Endothelial cell of umbilical vein (primary cell): ENCODE measurements at regions of chr15 and their contacts with region 1.

Region 1: GRCh38 chr15:63135804-63136203 is 14.1 kb downstream of the LACTB start:
- DNase-seq: peak; percentile 94
- H3K4me3 ChIP-seq: no peak overlapping the region
- H3K27ac ChIP-seq: peak overlapping the region; percentile 96
- H3K4me1 ChIP-seq: peaks cover 36% of the 10 kb centered on the region
- H3K27me3 ChIP-seq: no peaks in the 10 kb centered on the region
- CTCF ChIP-seq: no peak
- POLR2A ChIP-seq: peak; percentile 78

Region 2: DNA sequence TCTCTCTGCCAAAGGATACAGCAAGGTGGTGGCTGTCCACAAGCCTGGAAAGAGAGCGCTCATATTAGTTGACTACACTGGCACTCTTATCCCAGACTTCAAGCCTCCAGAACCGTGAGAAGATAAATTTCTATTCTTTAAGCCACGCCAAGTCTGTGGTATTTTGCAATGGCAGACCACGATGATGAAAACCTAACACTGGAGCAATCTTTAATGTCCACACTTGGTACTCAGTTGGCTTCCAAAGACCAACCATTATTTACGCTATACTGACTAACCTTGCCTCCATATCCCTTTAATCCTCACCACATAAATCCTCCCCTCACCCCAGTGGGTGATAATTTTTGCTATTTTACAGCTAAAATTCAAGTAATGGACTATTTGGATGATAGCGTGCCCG is 31.1 kb before region 1 on chr15:
- CTCF ChIA-PET with region 1: no interaction called
- POLR2A ChIA-PET with region 1: no interaction called
- dilution Hi-C with region 1: no loop called
- intact Hi-C with region 1: no loop called
- DNase-seq: no peak
- H3K4me3 ChIP-seq: no peak overlapping the region
- H3K27ac ChIP-seq: no peak overlapping the region
- H3K4me1 ChIP-seq: peaks cover 3% of the 10 kb centered on the region
- H3K27me3 ChIP-seq: no peaks in the 10 kb centered on the region
- CTCF ChIP-seq: no peak
- POLR2A ChIP-seq: no peak

Region 3: GRCh38 chr15:63146669-63147068 is 10.9 kb after region 1 on chr15:
- CTCF ChIA-PET with region 1: interaction called, 11 read pairs
- POLR2A ChIA-PET with region 1: interaction called, 6 read pairs
- dilution Hi-C with region 1: no loop called
- intact Hi-C with region 1: no loop called
- DNase-seq: peak; percentile 32
- H3K4me3 ChIP-seq: no peak overlapping the region
- H3K27ac ChIP-seq: no peak overlapping the region
- H3K4me1 ChIP-seq: no peaks in the 10 kb centered on the region
- H3K27me3 ChIP-seq: no peaks in the 10 kb centered on the region
- CTCF ChIP-seq: peak in 1 of 2 donors; percentile 1
- POLR2A ChIP-seq: no peak

Region 4: DNA sequence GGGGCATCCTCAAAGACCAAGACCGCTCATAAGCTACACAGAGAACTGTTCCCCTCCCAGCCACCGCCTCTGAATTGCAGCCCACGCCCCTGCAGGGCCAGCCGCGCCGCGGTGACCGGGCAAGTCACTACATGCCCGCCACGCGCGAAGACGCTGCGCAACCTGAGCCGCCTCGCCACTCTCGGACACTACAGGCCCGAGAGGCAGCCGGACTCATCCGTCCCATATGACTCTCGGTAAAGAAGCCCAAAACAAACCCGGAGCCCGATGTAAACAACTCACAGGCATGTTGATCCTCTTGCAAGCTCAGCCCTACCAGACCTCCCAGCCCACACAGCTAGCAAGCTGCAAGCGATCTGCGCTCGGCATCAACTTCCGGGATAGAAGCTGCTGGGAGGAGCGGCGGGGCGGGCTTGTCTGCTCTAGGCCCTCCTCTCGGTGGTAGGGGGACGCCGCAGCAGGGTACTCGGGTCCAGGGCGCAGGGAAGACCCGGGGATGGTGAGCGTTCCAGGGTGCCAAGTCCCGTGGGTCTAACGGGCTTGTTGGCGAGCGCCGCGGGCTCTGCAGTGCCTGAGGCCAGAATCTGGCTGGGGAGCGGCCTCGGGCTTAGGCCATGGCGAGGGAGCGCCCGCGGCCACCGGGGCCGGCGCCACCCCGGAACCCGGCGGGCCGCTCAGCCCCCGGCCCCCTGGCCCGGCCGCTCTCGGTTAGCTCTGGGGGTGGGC is 21.5 kb after region 1 on chr15 and contains the start of gene RPS27L:
- CTCF ChIA-PET with region 1: interaction called, 8 read pairs
- POLR2A ChIA-PET with region 1: interaction called, 6 read pairs
- dilution Hi-C with region 1: no loop called
- intact Hi-C with region 1: loop called (anchors 1 kb)
- DNase-seq: peak; percentile 92
- H3K4me3 ChIP-seq: peak within 1 kb of the TSS; percentile 54 to 98 (median 88)
- H3K27ac ChIP-seq: peak within 1 kb of the TSS; percentile 71
- H3K4me1 ChIP-seq: peaks cover 11% of the 10 kb centered on the region
- H3K27me3 ChIP-seq: no peaks in the 10 kb centered on the region
- CTCF ChIP-seq: no peak
- POLR2A ChIP-seq: peak; percentile 99
- total RNA-seq, gene RPS27L: 338 and 345 TPM in 2 replicates

Region 5: DNA sequence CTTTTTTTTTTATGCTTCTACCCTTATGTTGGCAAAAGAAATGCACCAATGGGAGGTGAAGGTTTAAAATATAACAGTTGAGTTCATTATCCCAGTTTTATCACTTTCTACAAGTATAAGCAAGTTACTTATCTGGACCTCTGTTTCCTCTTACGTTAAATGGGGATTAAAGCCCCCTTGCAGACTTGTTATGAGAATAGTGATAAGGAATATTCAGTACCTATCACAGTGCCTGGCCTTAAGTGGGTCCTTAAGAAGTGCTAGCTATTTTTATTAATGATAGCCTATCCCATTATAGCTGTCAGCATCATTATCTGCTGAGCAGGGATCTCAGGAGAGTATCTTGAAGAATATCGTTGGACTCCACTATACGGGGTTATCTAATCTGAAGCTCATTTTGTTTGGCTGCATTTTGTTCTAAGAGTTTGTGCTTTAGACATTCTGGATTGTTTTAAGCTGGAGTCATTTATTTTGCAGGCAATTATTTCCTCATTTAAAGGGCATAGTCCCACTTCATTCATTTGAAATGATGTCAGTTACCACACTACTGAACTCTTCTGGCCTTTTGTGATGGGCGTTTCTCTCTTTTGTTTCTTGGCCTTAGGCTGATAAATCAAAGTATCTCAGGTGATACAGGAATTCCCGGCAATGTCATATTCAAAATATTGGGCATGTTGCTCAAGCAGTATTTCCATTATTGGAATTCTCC is 82.5 kb after region 1 on chr15:
- CTCF ChIA-PET with region 1: no interaction called
- POLR2A ChIA-PET with region 1: no interaction called
- dilution Hi-C with region 1: no loop called
- intact Hi-C with region 1: no loop called
- DNase-seq: no peak
- H3K4me3 ChIP-seq: no peak overlapping the region
- H3K27ac ChIP-seq: peak overlapping the region; percentile 39
- H3K4me1 ChIP-seq: peaks cover 41% of the 10 kb centered on the region
- H3K27me3 ChIP-seq: no peaks in the 10 kb centered on the region
- CTCF ChIP-seq: no peak
- POLR2A ChIP-seq: no peak